Activated B cell treated with CpG ODN at 0.5 μM for 24 hours (primary cell): ENCODE measurements at regions of chr10 and their contacts with region 1.

Region 1: GRCh38 chr10:22420787-22421517 is 75.7 kb downstream of the SPAG6 start:
- DNase-seq: no peak
- ATAC-seq: peak; percentile 42
- H3K4me3 Mint-ChIP-seq: no peak overlapping the region
- H3K27ac Mint-ChIP-seq: no peak overlapping the region
- H3K4me1 Mint-ChIP-seq: peaks cover 1% of the 10 kb centered on the region
- H3K27me3 Mint-ChIP-seq: no peaks in the 10 kb centered on the region
- CTCF ChIP-seq: no peak

Region 2: DNA sequence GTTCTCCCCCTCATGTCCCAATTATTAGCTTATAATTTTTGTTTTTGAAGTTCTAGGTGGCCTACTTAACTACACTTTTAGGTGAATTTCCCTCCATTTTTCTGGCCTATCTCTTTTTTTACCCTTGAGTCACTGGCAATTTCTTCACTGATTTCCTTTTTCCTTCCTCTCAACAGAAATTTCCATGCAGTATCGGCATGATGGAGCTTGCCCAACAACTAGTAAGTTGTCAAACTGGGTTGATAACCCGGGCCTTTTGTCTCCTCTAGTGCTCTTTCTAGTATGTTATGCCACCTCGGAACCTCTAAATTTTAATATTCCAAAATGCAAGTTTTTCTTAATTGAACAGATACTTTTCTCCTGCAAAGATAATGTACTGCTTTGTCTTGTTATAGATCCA is 739.8 kb before region 1 on chr10:
- CTCF ChIA-PET with region 1: no interaction called
- POLR2A ChIA-PET with region 1: no interaction called
- intact Hi-C with region 1: no loop called
- DNase-seq: no peak
- ATAC-seq: no peak
- H3K4me3 Mint-ChIP-seq: no peak overlapping the region
- H3K27ac Mint-ChIP-seq: no peak overlapping the region
- H3K4me1 Mint-ChIP-seq: no peaks in the 10 kb centered on the region
- H3K27me3 Mint-ChIP-seq: no peaks in the 10 kb centered on the region
- CTCF ChIP-seq: no peak

Region 3: DNA sequence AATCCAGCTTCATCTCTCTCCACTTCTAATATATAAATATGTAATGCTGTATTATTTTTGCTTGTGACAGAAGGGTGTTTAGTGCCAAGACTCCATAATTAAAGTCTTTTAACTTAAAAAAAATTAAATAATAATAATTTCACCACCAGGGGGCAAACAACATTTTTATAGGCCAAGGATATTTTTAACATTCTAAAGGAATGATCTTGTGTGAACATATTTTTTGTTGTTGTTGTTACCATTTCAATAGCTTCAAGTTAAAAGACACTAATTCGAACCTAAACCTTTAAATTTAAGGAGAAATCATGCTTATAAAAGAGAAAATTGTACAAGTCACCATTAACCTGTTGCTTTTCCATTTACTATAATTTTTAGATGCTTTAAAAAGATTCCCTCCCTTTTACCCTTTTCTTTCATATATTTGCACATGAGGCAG is 410.0 kb before region 1 on chr10:
- CTCF ChIA-PET with region 1: no interaction called
- POLR2A ChIA-PET with region 1: no interaction called
- intact Hi-C with region 1: loop called (anchors 1 kb)
- DNase-seq: no peak
- ATAC-seq: no peak
- H3K4me3 Mint-ChIP-seq: no peak overlapping the region
- H3K27ac Mint-ChIP-seq: no peak overlapping the region
- H3K4me1 Mint-ChIP-seq: peaks cover 11% of the 10 kb centered on the region
- H3K27me3 Mint-ChIP-seq: no peaks in the 10 kb centered on the region
- CTCF ChIP-seq: peak; percentile 86

Region 4: GRCh38 chr10:22103701-22104470 is 317.1 kb before region 1 on chr10:
- CTCF ChIA-PET with region 1: no interaction called
- POLR2A ChIA-PET with region 1: no interaction called
- intact Hi-C with region 1: loop called (anchors 5 kb)
- DNase-seq: no peak
- ATAC-seq: peak; percentile 37
- H3K4me3 Mint-ChIP-seq: no peak overlapping the region
- H3K27ac Mint-ChIP-seq: no peak overlapping the region
- H3K4me1 Mint-ChIP-seq: no peaks in the 10 kb centered on the region
- H3K27me3 Mint-ChIP-seq: peaks cover 6% of the 10 kb centered on the region
- CTCF ChIP-seq: no peak

Region 5: DNA sequence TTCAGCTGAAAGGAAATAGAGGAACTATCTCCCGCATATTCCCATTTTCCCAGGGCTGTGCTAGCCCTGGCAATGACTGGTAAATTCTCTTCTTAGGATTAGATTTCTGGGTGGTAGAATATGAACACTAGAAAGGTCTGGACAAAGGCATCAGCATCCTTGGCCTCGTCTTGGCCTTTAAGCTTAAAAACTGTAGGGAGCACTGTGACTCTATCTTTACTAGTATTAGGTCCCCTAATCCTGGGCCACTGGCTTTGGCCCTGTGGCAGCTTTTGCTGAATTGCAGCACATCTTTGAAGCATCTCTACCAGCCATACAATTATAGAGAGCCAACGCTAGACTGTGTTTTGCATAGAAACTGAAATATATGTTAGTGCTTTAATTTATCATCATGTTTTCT is 161.7 kb before region 1 on chr10:
- CTCF ChIA-PET with region 1: no interaction called
- POLR2A ChIA-PET with region 1: no interaction called
- intact Hi-C with region 1: loop called (anchors 1 kb)
- DNase-seq: no peak
- ATAC-seq: peak; percentile 52
- H3K4me3 Mint-ChIP-seq: no peak overlapping the region
- H3K27ac Mint-ChIP-seq: no peak overlapping the region
- H3K4me1 Mint-ChIP-seq: peaks cover 3% of the 10 kb centered on the region
- H3K27me3 Mint-ChIP-seq: peaks cover 10% of the 10 kb centered on the region
- CTCF ChIP-seq: no peak

Region 6: GRCh38 chr10:22315455-22316284 is 105.3 kb before region 1 on chr10:
- CTCF ChIA-PET with region 1: no interaction called
- POLR2A ChIA-PET with region 1: no interaction called
- intact Hi-C with region 1: no loop called
- DNase-seq: no peak
- ATAC-seq: peak; percentile 12
- H3K4me3 Mint-ChIP-seq: peak overlapping the region; percentile 97
- H3K27ac Mint-ChIP-seq: peak overlapping the region; percentile 97
- H3K4me1 Mint-ChIP-seq: peaks cover 40% of the 10 kb centered on the region
- H3K27me3 Mint-ChIP-seq: no peaks in the 10 kb centered on the region
- CTCF ChIP-seq: no peak

Region 7: DNA sequence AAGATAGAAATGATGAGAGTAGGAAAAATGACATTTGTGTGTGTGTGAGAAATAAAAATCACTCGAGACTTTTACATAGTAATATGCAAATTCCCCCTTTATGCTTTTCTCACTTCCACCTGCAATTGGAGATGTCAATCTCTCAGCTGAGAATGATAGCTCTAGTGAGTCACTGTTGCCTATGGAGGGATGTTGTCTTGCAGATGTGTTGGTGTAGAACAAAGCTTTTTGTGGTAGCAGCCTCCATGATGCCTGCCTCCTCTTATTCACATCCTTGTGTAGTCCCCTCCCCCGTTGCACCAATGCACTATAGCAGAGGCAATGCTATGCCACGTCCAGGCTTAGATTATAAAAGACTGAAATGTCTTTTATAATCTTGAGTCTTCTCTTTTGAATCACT is 41.9 kb before region 1 on chr10:
- CTCF ChIA-PET with region 1: no interaction called
- POLR2A ChIA-PET with region 1: no interaction called
- intact Hi-C with region 1: no loop called
- DNase-seq: no peak
- ATAC-seq: peak; percentile 54
- H3K4me3 Mint-ChIP-seq: no peak overlapping the region
- H3K27ac Mint-ChIP-seq: no peak overlapping the region
- H3K4me1 Mint-ChIP-seq: peaks cover 22% of the 10 kb centered on the region
- H3K27me3 Mint-ChIP-seq: no peaks in the 10 kb centered on the region
- CTCF ChIP-seq: no peak

Region 8: GRCh38 chr10:22453948-22454591 is 33.1 kb after region 1 on chr10:
- CTCF ChIA-PET with region 1: no interaction called
- POLR2A ChIA-PET with region 1: no interaction called
- intact Hi-C with region 1: no loop called
- DNase-seq: no peak
- ATAC-seq: no peak
- H3K4me3 Mint-ChIP-seq: no peak overlapping the region
- H3K27ac Mint-ChIP-seq: peak overlapping the region; percentile 30
- H3K4me1 Mint-ChIP-seq: peaks cover 29% of the 10 kb centered on the region
- H3K27me3 Mint-ChIP-seq: no peaks in the 10 kb centered on the region
- CTCF ChIP-seq: no peak